Ascending aorta (tissue), 2 donors: ENCODE measurements at regions of chr11 and their contacts with region 1.

Region 1: DNA sequence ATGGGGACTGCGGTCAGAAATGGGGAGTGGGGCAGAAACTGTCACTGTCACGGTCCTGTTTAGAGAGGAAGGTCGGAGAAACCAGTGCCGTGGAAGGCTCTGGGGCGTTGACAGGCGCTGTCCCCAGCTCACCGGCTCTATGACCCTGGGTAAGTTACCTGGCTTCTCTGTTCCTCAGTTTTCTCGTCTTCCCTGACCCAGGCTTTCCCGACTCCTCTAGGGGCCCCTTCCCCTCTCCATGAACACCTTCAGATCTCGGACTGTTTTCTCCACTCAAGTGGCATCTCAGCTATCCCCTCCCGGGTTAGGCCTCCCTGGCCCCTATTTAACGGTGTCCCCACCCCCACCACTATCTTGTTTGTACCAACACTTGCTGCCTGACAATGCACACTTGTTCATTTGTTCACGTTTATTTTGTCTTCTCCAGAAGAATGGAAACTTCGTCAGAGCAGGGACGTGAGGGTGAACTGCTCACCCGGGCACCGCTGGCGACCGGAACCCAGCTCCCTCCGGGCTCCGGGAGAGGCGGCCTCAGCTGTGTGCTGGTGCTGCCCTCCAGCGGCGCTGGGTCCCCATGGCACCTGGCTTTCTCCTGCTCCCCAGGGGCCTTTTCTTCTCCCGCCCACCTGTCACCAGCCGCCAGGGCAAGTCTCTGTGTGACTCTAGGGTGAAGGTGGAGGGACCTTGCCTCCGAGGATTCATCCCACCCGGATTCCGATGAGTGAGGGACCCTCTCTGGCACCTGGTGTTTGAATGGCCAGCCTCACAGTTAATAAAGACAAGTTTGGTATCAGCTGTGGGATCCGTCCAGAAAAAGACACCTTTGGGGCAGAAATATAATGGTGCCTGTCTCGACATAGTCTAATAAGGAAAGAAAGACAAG is 33.1 kb upstream of the SLC35C1 start:
- DNase-seq: peak; percentile 20 to 92
- H3K4me3 ChIP-seq: peak overlapping the region; percentile 66 to 78
- H3K27ac ChIP-seq: peak overlapping the region; percentile 63 to 81
- H3K4me1 ChIP-seq: peaks cover 0 to 2% of the 10 kb centered on the region in 2 donors
- H3K27me3 ChIP-seq: no peaks in the 10 kb centered on the region
- CTCF ChIP-seq: peak; percentile 89 to 94 (median 93)

Region 2: DNA sequence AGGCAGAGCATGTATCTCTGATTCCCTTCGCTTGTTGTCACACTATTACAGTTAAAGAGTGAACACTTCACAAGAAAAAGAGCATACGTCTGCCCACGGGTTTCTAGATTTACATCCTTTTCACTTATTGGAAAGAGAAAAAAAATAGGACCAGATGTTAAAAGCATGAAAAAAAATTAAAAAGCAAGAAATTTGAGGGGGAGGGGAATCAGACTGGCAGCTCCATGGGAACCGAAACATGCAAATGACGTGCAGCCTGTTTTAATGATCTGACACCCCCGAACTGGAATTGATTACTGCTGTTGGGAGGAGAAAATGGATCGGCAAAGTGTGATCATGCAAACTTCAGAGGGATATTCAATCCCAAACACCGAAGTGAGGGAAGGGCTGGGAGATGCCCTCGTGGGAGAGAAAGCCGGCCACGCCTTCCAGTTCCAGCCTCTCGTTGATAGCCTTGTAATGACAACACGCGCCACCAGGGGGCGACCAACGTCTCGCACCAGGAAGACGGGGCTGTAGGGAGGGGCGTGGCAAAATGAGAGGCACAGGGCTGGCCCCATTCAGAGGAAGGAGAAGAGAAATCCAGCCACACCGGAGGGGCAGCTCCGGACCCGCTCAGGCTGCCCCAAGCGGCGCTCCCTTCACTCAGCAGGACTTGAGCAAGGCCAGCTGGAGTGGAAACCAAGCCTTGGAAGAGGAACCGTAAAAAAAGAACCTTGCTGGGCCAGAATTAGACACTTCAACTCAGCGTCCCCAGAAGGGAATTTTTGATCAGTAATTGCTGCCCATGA is 431.9 kb before region 1 on chr11:
- intact Hi-C with region 1: loop called (anchors 1 kb)
- DNase-seq: peak; percentile 80 to 98
- H3K4me3 ChIP-seq: peak overlapping the region; percentile 27 to 39
- H3K27ac ChIP-seq: peak overlapping the region in 1 of 2 donors; percentile 36
- H3K4me1 ChIP-seq: no peaks in the 10 kb centered on the region
- H3K27me3 ChIP-seq: no peaks in the 10 kb centered on the region
- CTCF ChIP-seq: peak; percentile 87 to 92 (median 87)

Region 3: DNA sequence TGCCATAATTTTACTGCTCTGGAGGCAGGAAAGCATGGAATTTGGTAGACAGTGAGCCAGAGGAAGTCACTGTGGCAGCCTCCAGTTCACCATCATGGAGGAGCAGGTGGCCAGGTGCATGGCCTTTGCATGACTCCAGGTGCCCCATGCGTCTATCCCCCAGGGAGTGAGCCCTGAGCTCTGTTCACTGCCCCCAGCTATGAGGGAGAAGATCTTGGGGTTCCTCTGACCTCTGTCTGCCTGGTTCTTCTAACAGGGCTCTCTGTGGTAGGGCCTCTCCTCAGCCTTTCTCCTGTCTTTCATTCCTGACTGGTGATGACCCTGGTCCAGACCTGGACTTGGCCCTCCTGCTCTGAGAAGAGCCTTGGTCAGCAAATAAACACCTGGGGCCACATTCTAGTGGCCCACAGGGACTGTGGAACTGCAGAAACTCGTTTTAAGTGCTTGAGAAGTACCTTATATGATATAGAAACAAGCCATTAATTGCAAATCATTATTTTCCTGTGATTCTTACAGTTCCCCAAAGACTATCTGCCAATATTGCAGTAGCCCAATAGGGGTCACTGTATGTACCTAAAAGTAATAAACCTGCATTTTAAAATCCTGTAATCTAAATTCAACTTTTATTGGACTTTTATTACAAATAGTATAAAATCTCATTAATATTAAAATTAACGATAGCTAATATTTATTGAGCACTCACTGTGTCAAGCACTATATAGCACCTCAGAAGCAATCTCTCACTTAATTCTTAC is 365.7 kb before region 1 on chr11:
- intact Hi-C with region 1: loop called (anchors 10 kb)
- DNase-seq: no peak
- H3K4me3 ChIP-seq: no peak overlapping the region
- H3K27ac ChIP-seq: no peak overlapping the region
- H3K4me1 ChIP-seq: no peaks in the 10 kb centered on the region
- H3K27me3 ChIP-seq: no peaks in the 10 kb centered on the region
- CTCF ChIP-seq: peak in 2 of 3 experiments; percentile 19 to 41

Region 4: GRCh38 chr11:45590743-45591142 is 181.1 kb before region 1 on chr11:
- intact Hi-C with region 1: loop called (anchors 5 kb)
- DNase-seq: peak; percentile 12 to 85
- H3K4me3 ChIP-seq: no peak overlapping the region
- H3K27ac ChIP-seq: peak overlapping the region in 1 of 2 donors; percentile 26
- H3K4me1 ChIP-seq: peaks cover 7 to 9% of the 10 kb centered on the region in 2 donors
- H3K27me3 ChIP-seq: no peaks in the 10 kb centered on the region
- CTCF ChIP-seq: no peak

Region 5: DNA sequence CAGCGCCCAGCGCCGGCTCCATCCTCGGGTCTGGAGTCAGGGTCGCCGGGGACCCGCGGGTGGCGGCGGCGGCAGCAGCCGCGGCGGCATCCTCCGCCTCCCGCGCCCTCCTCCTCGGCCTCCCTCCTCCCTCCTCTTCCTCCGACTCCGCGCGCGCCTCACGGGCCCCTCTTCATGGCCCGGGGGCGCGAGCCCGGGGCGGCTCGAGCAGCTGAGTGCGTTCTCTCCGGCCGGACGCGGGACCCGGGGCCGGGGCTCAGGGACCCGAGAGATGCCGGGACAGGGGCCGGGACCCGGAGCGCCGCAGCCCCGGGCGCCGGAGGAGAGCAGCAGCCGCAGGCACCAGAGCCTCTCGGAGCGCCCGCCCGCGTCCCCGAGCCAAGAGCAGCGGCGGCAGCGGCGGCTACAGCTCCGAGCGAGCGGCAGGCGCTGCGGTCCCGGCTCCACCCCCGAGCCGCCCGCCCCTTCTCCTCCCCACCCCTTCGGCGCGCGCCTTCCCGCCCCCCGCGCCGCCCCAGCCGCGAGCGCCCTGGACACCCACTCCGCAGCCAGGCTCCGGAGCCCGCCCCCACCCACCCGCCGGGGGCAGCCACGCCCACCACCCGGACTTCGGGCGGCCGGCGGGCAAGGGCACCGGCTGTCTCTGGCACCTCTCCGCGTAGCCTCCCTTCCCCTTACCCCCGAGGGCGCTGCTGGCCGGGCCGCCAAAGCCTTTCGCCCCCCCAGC is 106.4 kb before region 1 on chr11 and contains the start of gene CHST1:
- intact Hi-C with region 1: loop called (anchors 2 kb)
- DNase-seq: peak in 1 of 2 donors; percentile 85
- H3K4me3 ChIP-seq: peak within 1 kb of the TSS; percentile 62 to 78
- H3K27ac ChIP-seq: peak within 1 kb of the TSS; percentile 64 to 79
- H3K4me1 ChIP-seq: peaks cover 0 to 27% of the 10 kb centered on the region in 2 donors
- H3K27me3 ChIP-seq: no peaks in the 10 kb centered on the region
- CTCF ChIP-seq: no peak
- total RNA-seq, gene CHST1: 40.2 TPM

Region 6: DNA sequence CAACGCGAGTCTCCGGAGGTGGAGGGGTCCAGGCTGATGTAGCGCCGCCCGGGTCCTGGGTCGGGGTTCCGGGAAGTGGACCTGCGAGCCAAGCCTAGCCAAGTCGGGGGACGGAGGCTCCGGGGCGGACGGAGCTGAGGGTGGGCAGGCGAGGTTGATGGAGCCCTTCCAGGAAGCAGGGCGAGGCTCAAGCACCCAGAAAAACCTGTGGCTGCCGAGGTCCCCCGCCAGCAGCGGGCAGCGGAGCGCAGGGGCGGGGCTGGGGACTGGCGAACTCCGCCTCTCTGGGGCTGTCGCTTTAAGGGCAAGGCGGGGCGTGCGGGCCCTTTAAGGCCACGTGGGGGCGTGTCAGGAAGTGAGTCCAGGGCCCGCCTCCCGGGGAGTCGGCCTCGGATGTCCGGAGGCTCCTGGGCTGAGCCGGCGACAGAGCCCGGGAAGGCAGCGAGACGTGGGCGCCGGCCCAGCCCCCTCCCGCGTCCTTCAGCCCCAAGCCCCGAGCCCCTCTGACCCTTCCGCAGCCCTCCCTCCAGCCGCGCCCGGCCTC is 33.0 kb after region 1 on chr11 and contains the start of gene SLC35C1:
- intact Hi-C with region 1: loop called (anchors 2 kb)
- DNase-seq: peak; percentile 89 to 98
- H3K4me3 ChIP-seq: peak within 1 kb of the TSS; percentile 89 to 99
- H3K27ac ChIP-seq: peak within 1 kb of the TSS; percentile 84 to 90
- H3K4me1 ChIP-seq: peaks cover 9 to 29% of the 10 kb centered on the region in 2 donors
- H3K27me3 ChIP-seq: no peaks in the 10 kb centered on the region
- CTCF ChIP-seq: peak in 2 of 3 experiments; percentile 4 to 14
- total RNA-seq, gene SLC35C1: 47.7 TPM